ENCODE measurements at regions of chr4 and their contacts with region 1.

Region 1: GRCh38 chr4:1842993-1843448 is 12.9 kb downstream of the LETM1 start:
- DNase-seq: peak in 1 of 2 donors; percentile 44
- ATAC-seq: peak in 7 of 8 donors; percentile 47 to 83 (median 61)
- H3K4me3 ChIP-seq: no peak overlapping the region
- H3K27ac ChIP-seq: peak overlapping the region in 7 of 10 donors; percentile 40 to 68 (median 52)
- H3K4me1 ChIP-seq: peaks cover 0 to 27% (median 18%) of the 10 kb centered on the region in 9 donors
- H3K27me3 ChIP-seq: no peaks in the 10 kb centered on the region
- CTCF ChIP-seq: no peak

Region 2: DNA sequence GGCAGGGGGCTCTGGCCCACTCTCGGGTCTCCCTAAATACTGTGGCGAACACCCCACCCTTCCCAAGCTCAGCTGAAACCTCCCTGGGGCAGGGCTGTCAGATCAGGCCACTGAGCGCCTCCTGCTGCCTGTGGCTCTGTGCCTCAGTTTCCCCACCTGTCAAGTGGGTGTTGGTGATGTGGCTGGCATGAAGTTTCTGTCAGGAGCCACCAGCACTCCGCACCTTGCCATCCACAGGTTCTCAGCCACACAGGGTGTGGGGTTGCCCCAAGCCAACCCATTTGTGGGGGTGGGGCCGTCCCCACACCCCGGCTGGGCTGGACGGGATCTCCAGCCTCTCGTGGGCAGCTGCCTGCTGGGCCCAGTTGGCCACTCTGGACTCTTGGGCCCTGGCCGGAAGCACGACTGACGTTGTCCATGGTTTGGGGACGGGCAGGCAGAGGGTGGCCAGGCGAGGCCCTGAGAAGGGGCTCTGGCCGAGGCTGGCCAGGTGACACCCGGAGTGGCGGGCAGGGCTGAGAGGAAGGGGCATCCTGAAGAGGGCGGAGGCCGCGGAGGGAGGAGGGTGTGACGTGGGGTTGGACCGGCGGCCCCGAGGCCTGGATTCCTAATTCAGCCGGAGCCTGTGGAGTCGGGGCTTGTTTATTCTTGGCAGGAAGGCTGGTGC is 55.5 kb before region 1 on chr4:
- intact Hi-C with region 1: loop called in 1 of 10 experiments (anchors 2 kb)
- DNase-seq: no peak
- ATAC-seq: no peak
- H3K4me3 ChIP-seq: no peak overlapping the region
- H3K27ac ChIP-seq: peak overlapping the region in 3 of 10 donors; percentile 12 to 34 (median 26)
- H3K4me1 ChIP-seq: peaks cover 0 to 16% (median 12%) of the 10 kb centered on the region in 9 donors
- H3K27me3 ChIP-seq: peaks cover 0 to 14% (median 0%) of the 10 kb centered on the region in 7 donors
- CTCF ChIP-seq: no peak

Region 3: DNA sequence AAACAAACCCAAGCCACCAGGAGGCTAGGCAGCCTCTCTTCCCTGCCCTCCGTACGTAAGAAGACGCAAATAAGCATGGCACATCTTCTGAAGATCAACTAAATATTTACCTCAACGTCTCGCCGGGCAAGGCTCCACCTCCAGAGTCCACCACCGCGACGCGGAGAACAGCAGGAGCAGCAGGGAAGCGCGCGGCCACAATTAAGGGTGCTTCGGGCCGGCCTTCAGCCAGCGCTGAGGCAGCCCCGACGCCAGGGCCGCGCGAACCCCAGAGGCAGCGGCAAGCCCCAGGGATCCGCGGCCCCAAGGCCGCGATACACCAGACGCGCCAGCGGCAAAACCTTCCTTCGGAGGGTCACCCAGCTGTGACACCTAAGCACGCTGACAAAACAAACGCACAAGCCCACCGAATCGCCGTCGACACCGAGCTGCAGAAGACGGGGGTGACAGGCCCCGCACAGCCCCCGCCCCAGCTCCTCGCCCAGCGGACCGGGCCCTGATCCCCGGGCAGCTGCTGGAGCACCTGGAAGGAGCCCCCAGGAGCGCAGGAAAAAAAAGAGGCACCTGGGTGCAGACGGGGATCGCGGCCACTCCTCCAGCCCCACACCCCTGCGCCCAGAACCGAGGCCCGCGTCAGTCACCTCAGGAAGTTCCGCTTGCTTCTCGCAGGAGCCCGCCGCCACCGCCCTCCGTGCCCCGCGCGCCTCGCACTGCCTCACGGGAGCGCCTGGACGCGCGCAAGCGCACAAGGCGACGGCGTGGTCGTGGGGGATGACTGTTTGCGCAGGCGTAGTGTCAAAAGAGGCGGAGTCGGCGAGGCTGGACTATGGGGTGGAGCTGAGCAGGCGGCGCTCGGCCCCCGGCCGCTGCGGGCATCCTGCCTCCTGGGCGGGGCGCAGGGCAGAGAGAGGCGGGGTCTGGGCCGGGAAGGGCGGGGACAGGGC is 398.7 kb after region 1 on chr4 and contains the starts of genes HAUS3 and POLN:
- intact Hi-C with region 1: no loop called
- DNase-seq: peak; percentile 98 to 99
- ATAC-seq: peak; percentile 97 to 100 (median 98)
- H3K4me3 ChIP-seq: peak within 1 kb of the TSS; percentile 69 to 97 (median 88)
- H3K27ac ChIP-seq: peak within 1 kb of the TSS in 9 of 10 donors; percentile 65 to 87 (median 79)
- H3K4me1 ChIP-seq: peaks cover 4 to 83% (median 50%) of the 10 kb centered on the region in 9 donors
- H3K27me3 ChIP-seq: no peaks in the 10 kb centered on the region
- CTCF ChIP-seq: no peak
- total RNA-seq, gene HAUS3: 4.0 to 7.3 (median 6.5) TPM
- total RNA-seq, gene POLN: 1.3 to 3.1 (median 2.1) TPM